PC-9 (cell line): ENCODE measurements at regions of chr7 and their contacts with region 1.

Region 1: GRCh38 chr7:25069900-25070443 is 55.1 kb downstream of the CYCS start:
- DNase-seq: peak; percentile 67 to 76
- H3K4me3 ChIP-seq: no peak overlapping the region
- H3K27ac ChIP-seq: no peak overlapping the region
- H3K4me1 ChIP-seq: peaks cover 5% of the 10 kb centered on the region
- H3K27me3 ChIP-seq: no peaks in the 10 kb centered on the region
- CTCF ChIP-seq: peak; percentile 96

Region 2: GRCh38 chr7:24907311-24907886 is 162.6 kb before region 1 on chr7:
- CTCF ChIA-PET with region 1: no interaction called
- POLR2A ChIA-PET with region 1: no interaction called
- intact Hi-C with region 1: loop called (anchors 2 kb)
- DNase-seq: peak; percentile 47 to 88
- H3K4me3 ChIP-seq: peak overlapping the region; percentile 21
- H3K27ac ChIP-seq: peak overlapping the region; percentile 86
- H3K4me1 ChIP-seq: peaks cover 58% of the 10 kb centered on the region
- H3K27me3 ChIP-seq: no peaks in the 10 kb centered on the region
- CTCF ChIP-seq: no peak

Region 3: GRCh38 chr7:24971333-24972165 is 98.4 kb before region 1 on chr7:
- CTCF ChIA-PET with region 1: no interaction called
- POLR2A ChIA-PET with region 1: interaction called, 3 read pairs
- intact Hi-C with region 1: loop called (anchors 2 kb)
- DNase-seq: peak; percentile 76 to 85
- H3K4me3 ChIP-seq: no peak overlapping the region
- H3K27ac ChIP-seq: peak overlapping the region; percentile 10; the same call in 1 of the 2 replicates
- H3K4me1 ChIP-seq: peaks cover 57% of the 10 kb centered on the region
- H3K27me3 ChIP-seq: no peaks in the 10 kb centered on the region
- CTCF ChIP-seq: no peak